Right ventricle myocardium inferior (tissue), 1 donor: ENCODE measurements at regions of chr18 and their contacts with region 1.

Region 1: DNA sequence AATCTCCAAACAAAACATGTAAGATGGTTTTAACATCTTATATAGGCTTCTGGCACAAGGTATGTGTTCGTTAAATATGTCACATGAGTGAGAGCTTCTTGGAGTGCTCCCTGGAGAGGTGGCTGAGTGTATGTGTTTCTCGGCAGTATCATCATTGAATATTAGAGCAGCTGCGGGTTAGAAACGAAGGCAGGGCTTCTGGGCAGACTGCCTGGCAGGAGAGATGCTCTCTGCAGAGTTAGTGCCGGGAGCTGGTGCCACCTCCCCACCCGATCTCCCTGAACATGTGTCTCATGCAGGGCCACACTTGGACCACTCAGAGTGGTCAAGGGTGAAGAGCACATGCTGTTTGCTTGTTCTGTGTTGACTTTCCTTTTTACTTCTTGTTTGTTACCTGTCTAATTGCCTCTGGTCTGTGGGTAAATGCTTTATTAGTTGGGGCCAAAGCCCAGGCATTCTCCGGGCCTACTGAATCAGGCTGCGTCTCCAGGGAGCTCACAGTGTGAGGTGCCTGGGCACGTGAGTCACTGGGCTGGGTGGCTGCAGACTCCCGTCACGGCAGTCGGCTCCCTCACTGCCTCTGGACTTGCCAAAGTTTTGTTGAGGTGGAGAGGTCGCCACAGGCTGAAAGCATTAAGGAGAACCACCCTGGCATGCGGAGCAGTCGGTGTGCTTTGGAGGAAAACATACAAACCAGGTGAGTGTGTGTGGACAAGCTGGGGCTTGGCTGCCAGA is 246.6 kb downstream of the FHOD3 start:
- DNase-seq: no peak
- ATAC-seq: peak; percentile 43

Region 2: GRCh38 chr18:36481201-36481657 is 62.9 kb before region 1 on chr18:
- intact Hi-C with region 1: loop called (anchors 5 kb)
- DNase-seq: no peak
- ATAC-seq: no peak